ENCODE measurements at regions of chr16 and their contacts with region 1.

Region 1: GRCh38 chr16:82263521-82264143 is 93.6 kb upstream of the MPHOSPH6 start:
- DNase-seq: peak; percentile 22 to 29
- ATAC-seq: peak; percentile 56 to 90
- H3K4me3 ChIP-seq: no peak overlapping the region
- H3K27ac ChIP-seq: no peak overlapping the region
- H3K4me1 ChIP-seq: peaks cover 0 to 5% of the 10 kb centered on the region in 2 donors
- H3K27me3 ChIP-seq: no peaks in the 10 kb centered on the region
- CTCF ChIP-seq: peak; percentile 64 to 90 (median 80)
- POLR2A ChIP-seq: no peak

Region 2: GRCh38 chr16:81585785-81586184 is 677.8 kb before region 1 on chr16:
- in situ Hi-C with region 1: no loop called
- intact Hi-C with region 1: no loop called
- DNase-seq: no peak
- ATAC-seq: no peak
- H3K4me3 ChIP-seq: no peak overlapping the region
- H3K27ac ChIP-seq: no peak overlapping the region
- H3K4me1 ChIP-seq: no peaks in the 10 kb centered on the region
- H3K27me3 ChIP-seq: no peaks in the 10 kb centered on the region
- CTCF ChIP-seq: no peak
- POLR2A ChIP-seq: no peak

Region 3: DNA sequence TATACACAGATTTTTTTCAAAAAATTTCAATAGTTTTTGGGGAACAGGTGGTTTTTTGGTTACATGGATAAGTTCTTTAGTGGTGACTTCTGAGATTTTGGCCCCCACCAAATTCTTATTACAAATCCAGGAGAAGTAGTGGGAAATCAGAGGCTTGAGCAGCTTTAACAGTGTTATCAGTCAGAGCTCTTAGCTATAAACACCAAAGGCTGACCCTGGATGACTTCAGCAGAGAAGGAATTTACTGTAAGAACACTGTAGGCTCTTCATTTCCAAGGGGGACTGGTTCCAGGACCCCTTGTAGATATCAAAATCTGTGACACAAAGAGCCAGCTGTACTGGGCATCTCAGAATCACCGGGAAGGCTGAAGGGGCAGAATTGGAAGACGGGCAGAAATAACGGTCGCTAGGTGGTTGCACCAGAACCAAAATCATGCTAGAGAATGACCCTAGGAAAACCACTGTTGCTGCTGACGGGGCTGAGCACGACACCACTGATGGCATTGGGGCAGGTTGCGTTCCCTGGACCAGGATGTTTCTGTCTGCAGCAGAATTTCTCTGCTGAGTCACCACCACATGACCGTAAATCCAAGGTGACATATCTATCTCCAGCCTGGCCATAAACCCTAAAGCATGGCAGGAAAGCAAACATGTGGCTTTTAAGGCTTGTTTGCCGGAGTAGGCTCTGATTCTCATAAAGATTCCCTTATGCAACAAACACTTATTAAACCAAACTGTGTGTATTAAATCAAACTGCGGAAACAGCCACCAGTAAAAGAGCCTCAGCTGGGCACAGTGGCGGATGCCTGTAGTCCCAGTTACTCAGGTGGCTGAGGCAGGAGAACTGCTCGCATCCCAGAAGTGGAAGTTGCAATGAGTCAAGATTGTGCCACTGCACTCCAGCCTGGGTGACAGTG is 111.2 kb before region 1 on chr16:
- in situ Hi-C with region 1: no loop called
- intact Hi-C with region 1: no loop called
- DNase-seq: no peak
- ATAC-seq: no peak
- H3K4me3 ChIP-seq: no peak overlapping the region
- H3K27ac ChIP-seq: no peak overlapping the region
- H3K4me1 ChIP-seq: no peaks in the 10 kb centered on the region
- H3K27me3 ChIP-seq: no peaks in the 10 kb centered on the region
- CTCF ChIP-seq: no peak
- POLR2A ChIP-seq: no peak

Region 4: DNA sequence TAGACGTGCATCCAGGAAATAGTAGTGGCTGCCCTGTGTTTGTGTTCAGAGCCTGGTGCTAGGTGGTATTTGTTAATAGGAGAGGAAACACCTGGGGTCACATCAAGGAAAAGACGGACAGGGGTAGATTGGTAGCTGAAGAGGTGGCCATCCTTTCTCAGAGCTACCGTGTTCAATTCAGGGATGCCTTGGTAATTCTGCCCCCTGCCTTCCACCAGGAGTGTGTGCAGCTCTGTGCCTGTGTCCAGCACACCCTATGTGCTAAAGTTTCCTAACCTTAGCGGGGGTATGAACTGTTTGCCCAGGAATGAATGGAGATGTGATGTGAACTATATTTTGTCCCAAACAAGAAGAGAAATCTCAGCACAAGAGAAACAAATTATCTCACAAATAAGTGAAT is 80.5 kb after region 1 on chr16:
- in situ Hi-C with region 1: no loop called
- intact Hi-C with region 1: loop called (anchors 1 kb)
- DNase-seq: no peak
- ATAC-seq: no peak
- H3K4me3 ChIP-seq: no peak overlapping the region
- H3K27ac ChIP-seq: no peak overlapping the region
- H3K4me1 ChIP-seq: no peaks in the 10 kb centered on the region
- H3K27me3 ChIP-seq: peaks cover 0 to 4% (median 0%) of the 10 kb centered on the region in 3 donors
- CTCF ChIP-seq: peak in 1 of 5 experiments; percentile 40
- POLR2A ChIP-seq: no peak

Region 5: GRCh38 chr16:82384017-82384416 is 120.4 kb after region 1 on chr16:
- in situ Hi-C with region 1: no loop called
- intact Hi-C with region 1: no loop called
- DNase-seq: no peak
- ATAC-seq: no peak
- H3K4me3 ChIP-seq: no peak overlapping the region
- H3K27ac ChIP-seq: no peak overlapping the region
- H3K4me1 ChIP-seq: no peaks in the 10 kb centered on the region
- H3K27me3 ChIP-seq: no peaks in the 10 kb centered on the region
- CTCF ChIP-seq: no peak
- POLR2A ChIP-seq: no peak

Region 6: DNA sequence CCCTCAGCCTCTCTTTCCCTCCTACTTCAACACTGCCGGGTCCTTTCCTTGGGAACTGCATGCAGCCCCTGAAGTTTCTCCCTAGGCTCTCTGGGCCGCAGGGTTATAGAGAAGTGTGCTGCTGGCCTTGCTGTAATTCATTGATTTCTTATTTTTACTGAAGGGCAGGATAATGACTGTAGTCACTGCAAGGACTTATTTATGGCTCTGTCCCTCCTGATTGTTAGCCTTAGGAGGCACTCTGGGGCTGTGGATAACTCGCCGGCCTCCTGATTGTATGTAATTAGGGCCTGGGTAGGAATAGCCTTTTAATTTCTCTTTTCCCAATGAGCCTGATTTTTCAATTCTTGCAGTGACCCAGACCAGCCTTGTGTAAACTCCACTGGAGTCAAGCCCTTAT is 224.8 kb after region 1 on chr16:
- in situ Hi-C with region 1: no loop called
- intact Hi-C with region 1: no loop called
- DNase-seq: no peak
- ATAC-seq: no peak
- H3K4me3 ChIP-seq: no peak overlapping the region
- H3K27ac ChIP-seq: no peak overlapping the region
- H3K4me1 ChIP-seq: no peaks in the 10 kb centered on the region
- H3K27me3 ChIP-seq: no peaks in the 10 kb centered on the region
- CTCF ChIP-seq: no peak
- POLR2A ChIP-seq: no peak

Region 7: GRCh38 chr16:82580298-82580890 is 316.8 kb after region 1 on chr16:
- in situ Hi-C with region 1: loop called (anchors 5 to 25 kb)
- intact Hi-C with region 1: loop called (anchors 1 kb)
- DNase-seq: peak in 1 of 2 donors; percentile 31
- ATAC-seq: peak in 1 of 2 donors; percentile 58
- H3K4me3 ChIP-seq: no peak overlapping the region
- H3K27ac ChIP-seq: peak overlapping the region in 1 of 4 donors; percentile 42
- H3K4me1 ChIP-seq: peaks cover 5 to 28% of the 10 kb centered on the region in 2 donors
- H3K27me3 ChIP-seq: no peaks in the 10 kb centered on the region
- CTCF ChIP-seq: peak in 3 of 5 experiments; percentile 30 to 53 (median 34)
- POLR2A ChIP-seq: no peak

Region 8: DNA sequence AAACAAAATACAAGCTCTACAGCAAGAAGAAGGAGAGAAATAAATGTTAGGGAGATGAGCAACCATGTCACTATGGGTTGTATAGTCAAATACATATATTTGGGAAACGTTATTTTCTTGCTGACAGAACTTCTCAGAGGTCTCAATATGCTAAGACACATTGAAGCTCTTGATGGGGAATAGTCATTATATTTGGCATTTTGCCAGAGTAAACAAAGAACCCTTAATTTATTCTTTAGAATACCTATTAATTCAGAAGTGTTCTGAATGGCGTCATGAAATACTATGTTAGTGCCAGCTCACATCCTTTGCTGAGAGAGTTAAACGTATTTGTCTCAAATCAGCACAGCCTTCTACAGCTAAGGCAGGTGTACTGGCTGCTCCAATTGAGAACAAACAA is 822.0 kb after region 1 on chr16:
- in situ Hi-C with region 1: no loop called
- intact Hi-C with region 1: loop called (anchors 10 kb)
- DNase-seq: no peak
- ATAC-seq: no peak
- H3K4me3 ChIP-seq: no peak overlapping the region
- H3K27ac ChIP-seq: no peak overlapping the region
- H3K4me1 ChIP-seq: no peaks in the 10 kb centered on the region
- H3K27me3 ChIP-seq: no peaks in the 10 kb centered on the region
- CTCF ChIP-seq: no peak
- POLR2A ChIP-seq: no peak

Region 9: GRCh38 chr16:83215406-83216001 is 951.9 kb after region 1 on chr16:
- in situ Hi-C with region 1: loop called in 1 of 4 experiments (anchors 25 kb)
- intact Hi-C with region 1: no loop called
- DNase-seq: no peak
- ATAC-seq: no peak
- H3K4me3 ChIP-seq: no peak overlapping the region
- H3K27ac ChIP-seq: no peak overlapping the region
- H3K4me1 ChIP-seq: peaks cover 0 to 7% of the 10 kb centered on the region in 2 donors
- H3K27me3 ChIP-seq: no peaks in the 10 kb centered on the region
- CTCF ChIP-seq: peak in 3 of 5 experiments; percentile 42 to 65 (median 50)
- POLR2A ChIP-seq: no peak

Region 10: DNA sequence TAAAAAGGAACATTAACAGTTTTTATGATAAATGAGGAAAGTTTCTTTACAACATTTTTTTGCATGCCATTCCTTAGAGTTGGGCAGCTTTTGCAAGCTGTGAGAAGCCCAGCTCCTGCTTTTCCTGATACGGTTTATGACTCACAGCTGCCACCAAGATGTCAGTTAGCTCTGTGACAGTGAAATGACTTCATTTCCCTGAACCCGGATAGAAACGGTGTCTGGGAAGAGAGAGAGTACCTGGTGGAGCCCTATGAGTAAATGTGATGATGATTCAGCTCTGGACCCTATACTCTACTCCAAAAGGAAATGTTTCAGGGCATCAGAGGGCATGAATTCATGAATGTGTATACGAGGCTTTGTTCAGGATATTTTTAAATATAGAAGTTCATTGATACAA is 1177.9 kb after region 1 on chr16:
- in situ Hi-C with region 1: loop called (anchors 10 to 25 kb)
- intact Hi-C with region 1: loop called (anchors 2 kb)
- DNase-seq: no peak
- ATAC-seq: no peak
- H3K4me3 ChIP-seq: no peak overlapping the region
- H3K27ac ChIP-seq: no peak overlapping the region
- H3K4me1 ChIP-seq: no peaks in the 10 kb centered on the region
- H3K27me3 ChIP-seq: no peaks in the 10 kb centered on the region
- CTCF ChIP-seq: no peak
- POLR2A ChIP-seq: no peak

Region 11: GRCh38 chr16:83449861-83450260 is 1186.2 kb after region 1 on chr16:
- in situ Hi-C with region 1: loop called (anchors 10 to 25 kb)
- intact Hi-C with region 1: loop called (anchors 2 kb)
- DNase-seq: no peak
- ATAC-seq: no peak
- H3K4me3 ChIP-seq: no peak overlapping the region
- H3K27ac ChIP-seq: no peak overlapping the region
- H3K4me1 ChIP-seq: no peaks in the 10 kb centered on the region
- H3K27me3 ChIP-seq: no peaks in the 10 kb centered on the region
- CTCF ChIP-seq: no peak
- POLR2A ChIP-seq: no peak